CD8-positive, alpha-beta T cell (primary cell): ENCODE measurements at regions of chr1 and their contacts with region 1.

Region 1: GRCh38 chr1:169601093-169601881 is 15.0 kb upstream of the F5 start:
- DNase-seq: peak in 2 of 9 experiments; percentile 45 to 61
- ATAC-seq: no peak
- H3K4me3 ChIP-seq: no peak overlapping the region
- H3K4me3 Mint-ChIP-seq: no peak overlapping the region
- H3K27ac ChIP-seq: peak overlapping the region in 1 of 2 experiments; percentile 3
- H3K27ac Mint-ChIP-seq: peak overlapping the region; percentile 53
- H3K4me1 ChIP-seq: peaks cover 54% of the 10 kb centered on the region
- H3K4me1 Mint-ChIP-seq: peaks cover 54% of the 10 kb centered on the region
- H3K27me3 ChIP-seq: no peaks in the 10 kb centered on the region
- H3K27me3 Mint-ChIP-seq: no peaks in the 10 kb centered on the region
- CTCF ChIP-seq: peak; percentile 67

Region 2: GRCh38 chr1:169572187-169572586 is 29.1 kb before region 1 on chr1:
- CTCF ChIA-PET with region 1: no interaction called
- POLR2A ChIA-PET with region 1: no interaction called
- intact Hi-C with region 1: no loop called
- DNase-seq: no peak
- ATAC-seq: no peak
- H3K4me3 ChIP-seq: no peak overlapping the region
- H3K4me3 Mint-ChIP-seq: no peak overlapping the region
- H3K27ac ChIP-seq: no peak overlapping the region
- H3K27ac Mint-ChIP-seq: no peak overlapping the region
- H3K4me1 ChIP-seq: no peaks in the 10 kb centered on the region
- H3K4me1 Mint-ChIP-seq: peaks cover 11% of the 10 kb centered on the region
- H3K27me3 ChIP-seq: no peaks in the 10 kb centered on the region
- H3K27me3 Mint-ChIP-seq: peaks cover 3% of the 10 kb centered on the region
- CTCF ChIP-seq: no peak

Region 3: DNA sequence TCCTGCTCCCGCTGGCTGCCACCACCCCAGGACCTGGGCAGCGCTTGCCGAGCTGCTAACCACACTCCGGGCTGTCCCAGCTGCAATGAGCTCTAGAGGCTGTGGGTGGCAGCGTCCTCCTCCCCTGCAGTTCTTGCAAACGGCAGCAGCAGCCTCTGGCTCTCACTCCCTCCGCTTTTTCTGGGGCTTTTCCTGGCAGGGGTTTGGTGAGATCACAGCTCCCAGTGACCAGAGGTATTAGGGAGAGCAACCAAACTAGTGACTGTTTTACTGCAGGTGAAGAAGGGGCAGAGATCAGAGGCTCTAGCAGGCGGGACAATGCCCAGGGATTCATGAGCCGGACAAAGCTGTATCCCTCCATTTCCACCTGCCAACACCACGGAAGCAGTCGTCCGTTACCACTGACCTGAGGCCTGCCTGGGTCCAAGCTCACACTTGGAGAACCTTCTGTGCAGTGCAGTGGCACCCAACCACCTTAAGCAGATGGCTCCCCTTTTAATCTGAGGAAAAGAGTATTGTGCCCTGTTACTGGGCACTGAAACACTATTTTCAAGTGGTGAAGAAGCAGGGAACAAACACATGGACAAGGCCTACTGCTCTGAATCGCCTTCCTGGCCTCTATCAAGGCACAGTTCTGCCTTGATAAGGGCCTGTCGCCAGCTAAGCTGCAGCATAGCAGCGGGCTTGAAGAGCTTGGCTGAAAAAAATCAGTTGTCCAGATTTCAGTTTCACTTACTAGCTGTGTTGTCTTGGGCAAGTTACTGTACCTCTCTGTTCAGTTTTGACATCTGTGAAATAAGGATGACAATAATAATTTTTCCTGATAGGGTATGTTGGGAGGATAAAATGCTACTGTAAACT is 14.7 kb before region 1 on chr1 and contains the start of gene F5:
- CTCF ChIA-PET with region 1: interaction called, 38 read pairs
- POLR2A ChIA-PET with region 1: interaction called, 3 read pairs
- intact Hi-C with region 1: no loop called
- DNase-seq: peak; percentile 53 to 83 (median 74)
- ATAC-seq: peak; percentile 100
- H3K4me3 ChIP-seq: peak within 1 kb of the TSS; percentile 1 to 32
- H3K4me3 Mint-ChIP-seq: peak within 1 kb of the TSS; percentile 76
- H3K27ac ChIP-seq: no peak within 1 kb of the TSS
- H3K27ac Mint-ChIP-seq: no peak within 1 kb of the TSS
- H3K4me1 ChIP-seq: peaks cover 21% of the 10 kb centered on the region
- H3K4me1 Mint-ChIP-seq: peaks cover 17% of the 10 kb centered on the region
- H3K27me3 ChIP-seq: no peaks in the 10 kb centered on the region
- H3K27me3 Mint-ChIP-seq: peaks cover 12% of the 10 kb centered on the region
- CTCF ChIP-seq: peak; percentile 70
- total RNA-seq, gene F5: 0.28 to 0.30 TPM

Region 4: DNA sequence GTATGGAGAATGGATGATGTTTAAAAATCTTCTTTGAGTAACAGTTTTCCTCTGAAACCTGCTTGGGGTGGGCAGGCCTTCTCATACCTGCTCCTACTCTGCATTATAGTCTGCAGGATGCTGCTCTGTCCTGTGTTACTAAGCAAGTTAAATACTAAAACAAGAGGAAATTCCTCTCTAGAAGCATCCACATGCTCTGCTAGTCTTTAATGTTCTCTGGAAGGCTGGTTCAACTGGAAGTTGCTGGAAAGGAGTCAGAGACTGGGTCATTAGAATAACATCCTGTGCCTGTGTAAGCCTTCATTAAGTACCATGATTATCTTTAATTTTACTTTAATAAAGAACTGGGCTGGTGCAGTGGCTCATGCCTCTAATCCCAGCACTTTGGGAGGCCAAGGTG is 22.8 kb after region 1 on chr1:
- CTCF ChIA-PET with region 1: interaction called, 12 read pairs
- POLR2A ChIA-PET with region 1: no interaction called
- intact Hi-C with region 1: loop called in 1 of 2 experiments (anchors 2 kb)
- DNase-seq: no peak
- ATAC-seq: no peak
- H3K4me3 ChIP-seq: no peak overlapping the region
- H3K4me3 Mint-ChIP-seq: no peak overlapping the region
- H3K27ac ChIP-seq: no peak overlapping the region
- H3K27ac Mint-ChIP-seq: peak overlapping the region; percentile 71
- H3K4me1 ChIP-seq: peaks cover 63% of the 10 kb centered on the region
- H3K4me1 Mint-ChIP-seq: peaks cover 65% of the 10 kb centered on the region
- H3K27me3 ChIP-seq: no peaks in the 10 kb centered on the region
- H3K27me3 Mint-ChIP-seq: no peaks in the 10 kb centered on the region
- CTCF ChIP-seq: no peak

Region 5: GRCh38 chr1:169701261-169702005 is 100.1 kb after region 1 on chr1:
- CTCF ChIA-PET with region 1: interaction called, 170 read pairs
- POLR2A ChIA-PET with region 1: interaction called, 48 read pairs
- intact Hi-C with region 1: no loop called
- DNase-seq: peak in 2 of 9 experiments; percentile 27 to 67
- ATAC-seq: peak; percentile 78
- H3K4me3 ChIP-seq: peak overlapping the region in 1 of 2 experiments; percentile 1
- H3K4me3 Mint-ChIP-seq: peak overlapping the region; percentile 73
- H3K27ac ChIP-seq: peak overlapping the region; percentile 19 to 54
- H3K27ac Mint-ChIP-seq: peak overlapping the region; percentile 91
- H3K4me1 ChIP-seq: peaks cover 99% of the 10 kb centered on the region
- H3K4me1 Mint-ChIP-seq: peaks cover 96% of the 10 kb centered on the region
- H3K27me3 ChIP-seq: no peaks in the 10 kb centered on the region
- H3K27me3 Mint-ChIP-seq: no peaks in the 10 kb centered on the region
- CTCF ChIP-seq: peak; percentile 16

Region 6: DNA sequence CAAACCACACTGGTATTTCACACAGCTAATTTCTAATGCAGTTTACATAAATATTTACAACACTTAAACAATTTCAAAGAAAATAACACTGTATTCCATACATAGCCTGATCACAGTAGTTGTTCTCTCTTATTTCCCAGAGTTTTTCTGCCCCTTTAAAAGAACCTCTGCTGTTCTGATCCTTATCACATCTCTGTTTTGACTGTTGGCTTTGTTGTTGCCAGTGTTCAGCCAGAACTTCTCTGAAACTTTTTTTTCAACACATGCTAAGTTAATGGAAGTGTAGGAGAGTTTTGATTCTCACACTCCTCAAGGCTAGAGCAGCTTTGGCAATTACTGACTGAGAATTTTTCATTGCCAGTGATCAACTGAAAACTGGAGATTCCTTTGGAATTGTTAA is 121.5 kb after region 1 on chr1:
- CTCF ChIA-PET with region 1: interaction called, 10 read pairs
- POLR2A ChIA-PET with region 1: no interaction called
- intact Hi-C with region 1: no loop called
- DNase-seq: no peak
- ATAC-seq: no peak
- H3K4me3 ChIP-seq: no peak overlapping the region
- H3K4me3 Mint-ChIP-seq: no peak overlapping the region
- H3K27ac ChIP-seq: no peak overlapping the region
- H3K27ac Mint-ChIP-seq: no peak overlapping the region
- H3K4me1 ChIP-seq: no peaks in the 10 kb centered on the region
- H3K4me1 Mint-ChIP-seq: no peaks in the 10 kb centered on the region
- H3K27me3 ChIP-seq: peaks cover 0 to 2% of the 10 kb centered on the region in 2 experiments
- H3K27me3 Mint-ChIP-seq: peaks cover 4% of the 10 kb centered on the region
- CTCF ChIP-seq: no peak

Region 7: DNA sequence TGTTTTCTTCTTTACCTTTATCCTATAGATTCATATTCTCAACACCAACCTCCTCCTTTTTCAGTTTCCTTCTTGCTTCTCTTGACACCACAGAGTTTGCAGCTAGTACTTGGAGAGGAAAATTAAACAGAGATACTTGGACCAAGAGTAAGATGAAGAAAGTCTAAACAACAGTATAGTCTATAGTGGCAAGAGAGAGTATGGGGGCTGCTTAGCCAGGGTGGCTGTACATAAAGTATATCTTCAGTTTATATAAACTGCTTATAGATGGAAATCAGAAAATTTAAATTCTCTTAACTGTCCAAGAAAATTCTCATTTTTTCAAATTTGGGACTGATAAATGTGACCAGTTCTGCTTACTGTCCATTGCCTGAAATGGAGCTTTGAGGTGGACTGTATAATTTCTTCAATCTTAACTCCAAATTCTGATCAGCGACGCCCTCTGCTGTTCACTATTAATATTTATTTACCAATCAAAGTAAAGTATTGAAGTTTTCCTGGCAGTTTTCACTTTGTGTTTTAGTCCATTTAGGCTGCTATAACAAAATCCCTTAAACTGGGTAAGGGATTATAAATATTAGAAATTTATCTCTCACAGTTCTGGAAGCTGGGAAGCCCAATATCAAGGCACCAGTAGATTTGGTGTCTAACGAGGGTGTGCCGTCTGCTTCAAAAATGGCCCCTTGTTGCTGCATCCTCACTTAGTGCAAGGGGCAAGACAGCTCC is 208.2 kb after region 1 on chr1:
- CTCF ChIA-PET with region 1: interaction called, 24 read pairs
- POLR2A ChIA-PET with region 1: no interaction called
- intact Hi-C with region 1: loop called in 1 of 2 experiments (anchors 1 kb)
- DNase-seq: peak in 3 of 9 experiments; percentile 34 to 59 (median 52)
- ATAC-seq: no peak
- H3K4me3 ChIP-seq: no peak overlapping the region
- H3K4me3 Mint-ChIP-seq: no peak overlapping the region
- H3K27ac ChIP-seq: no peak overlapping the region
- H3K27ac Mint-ChIP-seq: no peak overlapping the region
- H3K4me1 ChIP-seq: no peaks in the 10 kb centered on the region
- H3K4me1 Mint-ChIP-seq: peaks cover 2% of the 10 kb centered on the region
- H3K27me3 ChIP-seq: no peaks in the 10 kb centered on the region
- H3K27me3 Mint-ChIP-seq: no peaks in the 10 kb centered on the region
- CTCF ChIP-seq: peak; percentile 71